WTC11 (cell line): ENCODE measurements at regions of chr18 and their contacts with region 1.

Region 1: DNA sequence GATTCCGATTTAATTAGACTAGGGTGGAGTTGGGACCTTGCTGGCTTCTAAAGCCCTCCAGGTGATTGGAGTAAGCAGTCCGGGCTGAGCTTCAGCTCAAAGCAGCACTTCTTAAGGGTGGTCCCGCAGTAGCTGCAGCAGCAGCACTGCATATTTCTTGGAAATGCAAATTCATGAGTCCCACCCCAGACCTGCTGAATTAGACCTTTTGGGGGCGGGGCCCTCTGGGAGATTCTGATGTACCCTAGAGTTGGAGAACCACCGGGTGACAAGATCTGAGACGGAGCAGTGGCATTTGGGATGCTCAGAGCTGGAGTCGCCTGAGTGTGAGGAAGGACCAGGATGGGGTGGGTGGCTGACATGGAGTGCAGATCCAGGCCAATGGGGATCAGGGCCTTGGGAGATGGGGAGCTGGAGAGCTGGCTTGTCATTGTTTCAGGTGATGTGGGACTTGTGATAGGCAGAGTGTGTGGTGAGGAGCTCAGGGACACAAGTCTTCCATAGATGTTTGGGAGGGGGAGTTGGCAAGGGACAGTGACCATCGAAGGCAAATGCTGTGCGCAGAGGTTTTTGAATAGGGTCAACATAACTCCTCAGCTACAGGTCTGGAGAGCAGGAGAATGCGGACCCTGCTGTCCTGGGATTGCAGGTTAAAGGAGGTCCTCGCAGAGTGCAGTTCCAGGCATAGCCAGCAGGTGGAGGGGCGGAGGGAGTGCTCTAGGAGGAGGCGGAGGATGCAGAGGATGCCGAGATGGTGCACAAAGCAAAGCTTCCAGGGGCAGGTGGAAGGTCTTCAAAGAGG is 130.9 kb upstream of the RAB12 start:
- DNase-seq: peak; percentile 93
- ATAC-seq: peak; percentile 93
- H3K4me3 Mint-ChIP-seq: no peak overlapping the region
- H3K27ac Mint-ChIP-seq: no peak overlapping the region
- H3K4me1 Mint-ChIP-seq: peaks cover 8% of the 10 kb centered on the region; the same call in 1 of the 2 replicates
- H3K27me3 Mint-ChIP-seq: no peaks in the 10 kb centered on the region
- CTCF ChIP-seq: peak; percentile 95

Region 2: GRCh38 chr18:8361941-8362471 is 116.4 kb before region 1 on chr18:
- CTCF ChIA-PET with region 1: interaction called, 12 read pairs
- POLR2A ChIA-PET with region 1: no interaction called
- DNase-seq: no peak
- ATAC-seq: peak; percentile 50
- H3K4me3 Mint-ChIP-seq: no peak overlapping the region
- H3K27ac Mint-ChIP-seq: no peak overlapping the region
- H3K4me1 Mint-ChIP-seq: peaks cover 38% of the 10 kb centered on the region
- H3K27me3 Mint-ChIP-seq: peaks cover 8% of the 10 kb centered on the region
- CTCF ChIP-seq: no peak

Region 3: GRCh38 chr18:8496186-8496585 is 17.8 kb after region 1 on chr18:
- CTCF ChIA-PET with region 1: interaction called, 13 read pairs
- POLR2A ChIA-PET with region 1: no interaction called
- DNase-seq: no peak
- ATAC-seq: peak; percentile 85
- H3K4me3 Mint-ChIP-seq: no peak overlapping the region
- H3K27ac Mint-ChIP-seq: no peak overlapping the region
- H3K4me1 Mint-ChIP-seq: peaks cover 7% of the 10 kb centered on the region
- H3K27me3 Mint-ChIP-seq: peaks cover 4% of the 10 kb centered on the region; the same call in 1 of the 2 replicates
- CTCF ChIP-seq: no peak

Region 4: DNA sequence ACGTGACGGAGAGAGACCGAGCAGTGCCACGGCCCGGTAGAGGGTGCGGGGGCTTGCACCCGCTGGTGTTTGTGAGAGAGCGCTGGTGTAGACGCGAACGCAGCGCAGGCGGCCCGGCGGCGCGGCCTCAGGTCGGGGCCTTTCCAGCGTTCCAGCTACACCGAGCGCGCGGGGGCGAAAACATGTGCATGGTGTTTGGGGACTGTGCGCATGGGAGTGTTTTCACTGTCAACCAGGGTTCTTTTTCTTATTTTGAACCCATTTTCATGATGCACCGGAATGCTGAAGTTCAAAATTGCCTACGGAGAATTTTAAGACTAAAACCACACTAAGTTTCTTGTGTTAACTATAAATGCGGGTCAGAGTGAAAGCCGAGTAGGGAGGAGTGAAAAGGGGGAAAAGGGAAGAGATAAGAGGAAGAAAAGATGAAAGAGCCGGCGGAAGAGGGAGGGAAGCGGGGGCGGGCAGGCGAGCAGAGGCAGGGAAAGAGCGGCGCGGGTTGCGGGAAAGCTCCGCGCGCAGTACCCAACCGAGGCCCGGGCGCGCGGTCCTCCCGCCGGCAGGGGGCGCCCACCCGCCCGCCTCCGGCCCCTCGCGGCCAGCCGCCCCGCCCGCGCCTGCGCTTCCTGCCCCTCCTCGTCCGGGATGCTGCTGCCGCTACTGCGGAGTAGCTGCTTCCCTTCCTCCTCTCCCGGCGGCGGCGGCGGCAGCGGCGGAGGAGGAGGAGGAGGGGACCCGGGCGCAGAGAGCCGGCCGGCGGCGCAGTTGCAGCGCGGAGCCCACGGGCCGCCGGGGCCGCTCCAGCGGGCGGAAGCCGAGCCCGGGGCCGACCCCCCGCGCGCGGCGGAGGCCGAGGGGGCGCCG is 130.7 kb after region 1 on chr18 and contains the start of gene RAB12:
- CTCF ChIA-PET with region 1: interaction called, 10 read pairs
- POLR2A ChIA-PET with region 1: no interaction called
- DNase-seq: peak; percentile 85
- ATAC-seq: peak; percentile 85
- H3K4me3 Mint-ChIP-seq: peak within 1 kb of the TSS; percentile 86
- H3K27ac Mint-ChIP-seq: peak within 1 kb of the TSS; percentile 72
- H3K4me1 Mint-ChIP-seq: peaks cover 56% of the 10 kb centered on the region
- H3K27me3 Mint-ChIP-seq: peaks cover 13% of the 10 kb centered on the region
- CTCF ChIP-seq: peak; percentile 78
- total RNA-seq, gene RAB12: 56.1 to 69.3 TPM (median 58.1 TPM) in 3 replicates